Colonic mucosa (tissue), 4 donors: ENCODE measurements at regions of chr2 and their contacts with region 1.

Region 1: GRCh38 chr2:231557571-231558237 is 27.5 kb upstream of the NMUR1 start:
- DNase-seq: peak; percentile 63
- H3K4me3 ChIP-seq: no peak overlapping the region
- H3K27ac ChIP-seq: peak overlapping the region; percentile 44
- H3K4me1 ChIP-seq: no peaks in the 10 kb centered on the region
- H3K27me3 ChIP-seq: no peaks in the 10 kb centered on the region
- CTCF ChIP-seq: peak; percentile 64

Region 2: DNA sequence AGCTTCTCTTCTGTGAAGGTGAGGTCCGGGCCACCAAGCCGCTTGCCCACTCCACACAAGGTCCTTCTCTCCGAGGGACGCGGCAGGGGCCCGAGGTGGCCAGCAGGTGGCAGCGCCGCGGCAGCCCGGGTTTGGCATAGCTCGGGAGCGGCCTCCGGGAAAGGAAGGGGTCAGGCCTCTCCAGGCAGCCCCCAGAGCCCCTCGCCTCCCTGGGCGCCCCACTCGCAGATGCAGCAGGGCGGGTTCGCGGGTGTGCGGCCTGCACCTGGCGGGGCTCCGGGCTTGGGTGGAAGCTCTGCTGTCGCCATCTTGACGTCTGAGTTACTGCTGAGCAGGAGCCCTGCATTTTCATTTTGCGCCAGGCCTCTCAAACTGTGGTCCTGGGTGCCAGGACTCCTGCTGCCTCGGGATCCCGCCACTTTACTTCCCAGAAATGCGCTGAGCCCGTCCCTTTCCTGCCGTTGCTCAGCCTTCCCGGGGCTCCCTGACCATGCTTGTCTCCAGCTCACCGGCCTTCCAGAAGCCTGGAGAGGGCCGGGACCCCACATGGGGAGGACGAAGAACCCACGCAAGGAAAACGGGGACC is 74.8 kb before region 1 on chr2:
- intact Hi-C with region 1: loop called (anchors 10 kb)
- DNase-seq: peak; percentile 77
- H3K4me3 ChIP-seq: peak overlapping the region; percentile 41
- H3K27ac ChIP-seq: peak overlapping the region; percentile 1
- H3K4me1 ChIP-seq: no peaks in the 10 kb centered on the region
- H3K27me3 ChIP-seq: no peaks in the 10 kb centered on the region
- CTCF ChIP-seq: peak; percentile 90

Region 3: DNA sequence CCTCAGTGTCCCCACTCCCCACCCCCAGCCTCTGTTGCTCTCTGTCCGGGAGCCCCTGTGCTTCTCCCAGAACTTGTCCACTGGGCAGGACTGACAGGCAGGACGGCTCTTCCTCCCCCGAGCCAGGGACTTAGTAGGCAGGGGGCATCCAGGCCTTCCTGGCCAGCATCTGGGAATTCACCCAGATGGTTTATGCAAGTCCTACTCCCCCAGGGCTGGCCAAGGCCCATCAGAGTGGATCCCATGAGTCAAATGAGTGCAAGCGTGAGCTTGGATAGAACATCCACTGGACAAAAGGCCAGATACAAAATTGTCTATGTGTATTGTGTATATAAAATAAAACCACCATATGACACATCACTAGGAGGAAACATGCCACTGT is 34.9 kb before region 1 on chr2:
- intact Hi-C with region 1: loop called (anchors 5 kb)
- DNase-seq: no peak
- H3K4me3 ChIP-seq: no peak overlapping the region
- H3K27ac ChIP-seq: no peak overlapping the region
- H3K4me1 ChIP-seq: no peaks in the 10 kb centered on the region
- H3K27me3 ChIP-seq: no peaks in the 10 kb centered on the region
- CTCF ChIP-seq: no peak

Region 4: GRCh38 chr2:231745303-231746038 is 187.8 kb after region 1 on chr2:
- intact Hi-C with region 1: no loop called
- DNase-seq: no peak
- H3K4me3 ChIP-seq: no peak overlapping the region
- H3K27ac ChIP-seq: no peak overlapping the region
- H3K4me1 ChIP-seq: no peaks in the 10 kb centered on the region
- H3K27me3 ChIP-seq: no peaks in the 10 kb centered on the region
- CTCF ChIP-seq: no peak